ENCODE measurements at regions of chr1 and their contacts with region 1.

Region 1: DNA sequence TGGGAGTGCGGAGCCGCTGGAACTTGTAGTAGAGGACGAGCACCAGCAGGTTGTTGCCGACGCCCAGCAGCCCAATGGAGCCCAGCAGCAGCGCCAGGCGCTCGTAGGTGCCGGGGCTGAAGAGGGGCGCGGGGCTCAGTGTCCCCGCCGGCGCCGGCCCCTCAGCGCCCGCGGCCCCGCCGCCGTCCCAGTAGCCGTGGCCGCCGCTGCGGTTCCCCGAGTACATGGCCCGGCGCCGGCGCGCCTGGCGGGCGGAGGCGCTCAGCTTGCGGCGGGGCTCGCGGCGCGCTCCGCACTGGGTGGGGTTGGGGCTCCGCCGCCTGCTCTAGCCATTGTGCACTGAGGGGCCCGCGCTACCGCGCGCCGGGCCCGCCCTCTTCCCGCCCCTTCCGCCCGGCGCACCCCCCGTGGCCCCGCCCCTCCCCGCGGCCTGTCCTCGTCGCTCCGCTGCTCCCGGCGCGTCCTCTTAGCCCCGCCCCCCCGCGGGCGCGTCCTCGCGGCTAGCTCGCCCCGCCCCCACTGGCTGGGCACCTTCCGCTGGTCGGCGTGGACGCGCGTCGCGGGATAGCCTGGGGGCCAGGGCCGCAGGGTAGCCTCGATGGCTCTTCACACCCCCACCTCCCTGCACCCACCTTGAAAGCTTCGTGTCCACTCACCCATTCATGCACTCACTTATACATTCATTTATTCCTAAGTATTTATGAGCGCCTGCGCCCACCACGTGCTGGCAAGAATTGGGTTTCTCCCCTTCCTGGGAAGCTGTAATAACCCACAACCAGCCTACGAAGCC is at the starts of genes CHML and OPN3:
- DNase-seq: peak; percentile 97
- H3K4me3 ChIP-seq: peak within 1 kb of the TSS; percentile 81 to 92 (median 90)
- H3K27ac ChIP-seq: peak within 1 kb of the TSS; percentile 87 to 92 (median 88)
- H3K4me1 ChIP-seq: peaks cover 0 to 28% (median 19%) of the 10 kb centered on the region in 4 donors
- H3K27me3 ChIP-seq: no peaks in the 10 kb centered on the region
- CTCF ChIP-seq: no peak
- EP300 ChIP-seq: no peak
- POLR2A ChIP-seq: no peak
- total RNA-seq, gene CHML: 1.6 to 14.6 (median 12.9) TPM
- total RNA-seq, gene OPN3: 23.5 to 107 (median 49.3) TPM

Region 2: GRCh38 chr1:241413386-241413785 is 226.8 kb before region 1 on chr1:
- in situ Hi-C with region 1: no loop called
- intact Hi-C with region 1: no loop called
- DNase-seq: no peak
- H3K4me3 ChIP-seq: no peak overlapping the region
- H3K27ac ChIP-seq: no peak overlapping the region
- H3K4me1 ChIP-seq: no peaks in the 10 kb centered on the region
- H3K27me3 ChIP-seq: no peaks in the 10 kb centered on the region
- CTCF ChIP-seq: no peak
- EP300 ChIP-seq: no peak
- POLR2A ChIP-seq: no peak

Region 3: GRCh38 chr1:241531195-241532161 is 108.7 kb before region 1 on chr1:
- in situ Hi-C with region 1: loop called in 2 of 4 experiments (anchors 10 to 25 kb)
- intact Hi-C with region 1: no loop called
- DNase-seq: no peak
- H3K4me3 ChIP-seq: peak overlapping the region; percentile 13 to 61 (median 40)
- H3K27ac ChIP-seq: peak overlapping the region; percentile 59 to 62 (median 59)
- H3K4me1 ChIP-seq: peaks cover 0 to 8% (median 1%) of the 10 kb centered on the region in 4 donors
- H3K27me3 ChIP-seq: peaks cover 4% of the 10 kb centered on the region
- CTCF ChIP-seq: peak; percentile 53 to 73 (median 65)
- EP300 ChIP-seq: no peak
- POLR2A ChIP-seq: no peak

Measured in transverse colon (tissue), 4 donors.